Lower leg skin (tissue), 4 donors: ENCODE measurements at regions of chr11 and their contacts with region 1.

Region 1: DNA sequence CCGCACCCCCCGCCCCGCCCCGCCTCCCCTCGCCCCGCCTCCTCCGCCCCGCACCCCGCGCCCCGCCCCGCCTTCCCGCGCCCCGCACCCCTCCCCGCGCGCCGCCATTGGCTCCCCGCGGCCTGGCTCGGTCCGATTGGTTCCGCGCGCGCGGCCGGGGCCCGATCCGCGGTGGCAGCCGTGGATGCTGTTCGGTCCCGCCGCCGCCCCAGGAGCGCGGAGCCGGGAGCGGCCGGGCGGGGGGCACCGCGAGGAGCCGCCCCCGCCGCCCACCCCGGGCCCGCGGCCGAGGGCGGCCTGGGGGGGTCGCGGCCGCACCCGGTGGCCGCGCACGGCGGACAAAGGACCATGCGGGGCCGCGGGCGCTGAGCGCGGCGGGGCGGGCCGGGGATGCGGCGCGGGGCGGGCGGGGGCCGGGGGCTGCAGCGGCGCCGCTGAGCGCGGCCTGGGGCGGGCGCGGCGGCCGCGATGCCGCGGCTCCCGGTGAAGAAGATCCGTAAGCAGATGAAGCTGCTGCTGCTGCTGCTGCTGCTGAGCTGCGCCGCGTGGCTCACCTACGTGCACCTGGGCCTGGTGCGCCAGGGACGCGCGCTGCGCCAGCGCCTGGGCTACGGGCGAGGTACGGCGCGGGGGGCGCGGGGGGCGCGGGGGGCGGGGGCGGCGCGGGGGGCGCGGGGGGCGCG is at the start of gene B4GALNT4:
- DNase-seq: no peak
- H3K4me3 ChIP-seq: no peak within 1 kb of the TSS
- CTCF ChIP-seq: no peak
- POLR2A ChIP-seq: no peak
- total RNA-seq, gene B4GALNT4: 1.8 to 20.0 (median 5.0) TPM

Region 2: DNA sequence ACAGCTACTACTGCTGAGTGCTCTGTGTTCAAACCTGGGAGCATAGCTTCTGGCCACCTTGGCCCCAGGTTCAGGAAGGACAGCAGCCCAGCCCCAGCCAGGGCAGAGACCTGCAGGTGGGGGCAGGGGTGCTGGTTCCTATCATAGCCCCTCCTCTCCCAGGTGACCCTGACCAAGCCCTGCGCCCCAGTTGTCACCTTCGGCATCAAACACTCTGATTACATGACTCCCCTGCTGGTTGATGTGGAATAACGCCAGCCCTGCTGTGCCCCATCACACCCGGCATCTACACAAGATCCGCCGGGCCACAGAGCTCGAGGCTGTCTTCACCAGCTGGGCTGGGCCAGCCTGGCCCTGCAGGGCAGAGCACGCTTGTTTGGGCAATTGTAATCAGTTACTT is 169.7 kb before region 1 on chr11:
- intact Hi-C with region 1: loop called (anchors 5 kb)
- DNase-seq: peak in 1 of 2 donors; percentile 79
- H3K4me3 ChIP-seq: no peak overlapping the region
- CTCF ChIP-seq: no peak
- POLR2A ChIP-seq: no peak

Region 3: GRCh38 chr11:429931-430456 is 60.5 kb after region 1 on chr11:
- intact Hi-C with region 1: no loop called
- DNase-seq: no peak
- H3K4me3 ChIP-seq: no peak overlapping the region
- CTCF ChIP-seq: no peak
- POLR2A ChIP-seq: no peak